ENCODE measurements at regions of chr17 and their contacts with region 1.

Region 1: DNA sequence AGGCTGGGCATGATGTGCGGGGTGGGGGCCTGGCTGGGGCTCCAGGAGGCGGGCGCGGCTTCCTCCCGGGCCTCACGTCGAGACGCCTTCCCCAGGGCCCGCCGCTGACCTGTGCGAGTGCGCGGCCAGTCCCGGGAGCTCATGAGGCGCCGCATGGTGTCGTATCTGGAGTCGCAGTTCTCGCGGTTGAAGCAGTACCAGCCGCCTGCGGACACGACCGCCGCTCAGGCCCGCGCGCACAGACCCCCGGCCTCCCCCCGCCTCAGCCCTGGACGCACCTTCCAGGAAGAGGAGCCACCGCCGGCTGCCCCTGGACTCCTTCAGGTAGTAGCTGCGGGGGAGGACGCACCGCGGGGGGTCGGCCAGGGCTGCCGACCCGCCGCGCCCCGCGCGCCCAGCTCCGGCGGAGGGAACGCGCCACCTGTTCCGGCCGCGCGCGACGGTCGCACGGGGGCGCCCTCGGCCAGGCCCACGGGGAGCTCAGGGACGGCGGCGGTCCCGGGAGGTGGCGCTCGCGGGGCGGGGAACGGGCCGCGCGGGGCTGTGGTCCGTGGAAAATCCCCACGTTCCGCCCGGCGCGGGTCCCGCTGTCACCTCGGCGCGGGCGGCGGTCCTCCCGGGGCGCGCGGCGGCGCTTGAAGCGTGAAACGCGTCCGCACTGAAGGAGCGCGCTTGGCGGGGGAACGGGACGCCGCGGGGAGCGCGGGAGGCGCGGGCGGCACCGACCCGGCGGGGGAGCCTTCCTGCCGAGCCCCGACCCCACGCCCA is 1.4 kb downstream of the NOTUM start:
- DNase-seq: peak; percentile 89
- CTCF ChIP-seq: peak; percentile 100

Region 2: DNA sequence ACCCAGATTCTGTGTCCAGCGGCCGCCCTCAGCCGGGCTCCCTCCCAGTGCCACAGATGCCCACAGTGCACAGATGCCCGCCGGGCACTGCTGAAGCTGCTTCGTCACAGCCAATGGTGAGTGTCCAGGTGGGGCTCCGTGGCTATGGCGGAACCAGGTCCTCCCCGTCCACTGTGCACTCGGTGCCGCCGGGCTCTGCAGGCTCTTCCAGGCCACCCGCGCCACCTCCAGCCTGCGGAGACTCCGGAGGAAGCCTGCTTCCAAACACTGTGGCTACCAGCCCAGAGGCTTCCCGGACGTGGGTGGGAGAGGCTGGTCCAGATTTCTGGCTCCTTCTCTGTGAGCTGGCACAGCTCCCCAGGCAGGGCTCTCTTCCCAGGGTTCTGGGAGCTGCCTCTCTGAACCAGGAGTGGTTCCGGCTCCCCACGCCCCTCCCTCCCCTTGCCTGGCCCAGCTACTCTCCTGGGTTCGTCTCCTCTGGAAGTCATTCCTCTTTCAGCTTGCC is 19.6 kb before region 1 on chr17:
- CTCF ChIA-PET with region 1: interaction called, 15 read pairs
- POLR2A ChIA-PET with region 1: no interaction called
- DNase-seq: no peak
- CTCF ChIP-seq: no peak

Region 3: DNA sequence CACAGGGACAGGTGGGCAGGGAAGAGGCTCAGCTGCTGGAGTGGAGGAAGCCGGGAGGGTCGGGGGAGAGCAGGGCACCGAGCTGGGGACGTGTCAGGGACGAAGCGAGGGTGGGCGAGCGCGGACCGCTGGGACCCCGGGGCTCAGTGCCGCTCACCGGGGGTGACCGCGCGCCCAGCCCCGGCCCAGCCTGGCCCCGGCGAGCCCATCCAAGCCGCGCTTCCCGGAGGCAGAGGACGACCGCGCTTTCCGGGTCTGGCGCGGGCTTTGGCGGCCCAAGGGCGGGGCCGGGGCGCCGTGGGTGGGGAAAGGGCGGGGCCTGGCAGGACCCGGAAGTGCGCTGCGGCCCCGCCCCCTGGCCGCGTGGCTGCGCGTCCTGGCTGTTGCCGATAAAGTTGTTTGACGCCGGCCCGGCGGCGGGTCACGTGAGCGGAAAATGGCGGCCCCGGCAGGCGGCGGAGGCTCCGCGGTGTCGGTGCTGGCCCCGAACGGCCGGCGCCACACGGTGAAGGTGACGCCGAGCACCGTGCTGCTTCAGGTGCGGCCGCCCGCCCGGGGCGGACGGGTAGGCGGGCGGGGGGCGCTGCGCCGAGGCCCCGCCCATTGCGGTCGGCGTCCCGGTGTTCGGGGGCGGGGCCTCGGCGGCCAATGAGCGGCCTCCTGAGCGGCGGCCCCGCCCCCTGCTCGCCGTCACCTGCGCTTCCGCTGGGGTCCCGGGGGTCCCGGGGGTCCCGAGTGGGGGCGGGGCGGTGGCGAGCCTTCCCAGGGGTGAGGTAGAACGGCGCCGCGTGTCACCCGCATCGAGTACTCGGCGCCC is 17.9 kb after region 1 on chr17 and contains the start of gene ASPSCR1:
- CTCF ChIA-PET with region 1: interaction called, 18 read pairs
- POLR2A ChIA-PET with region 1: no interaction called
- DNase-seq: peak; percentile 96
- CTCF ChIP-seq: no peak

Region 4: GRCh38 chr17:82030470-82031302 is 71.1 kb after region 1 on chr17:
- CTCF ChIA-PET with region 1: interaction called, 12 read pairs
- POLR2A ChIA-PET with region 1: no interaction called
- DNase-seq: peak; percentile 86
- CTCF ChIP-seq: peak; percentile 96

Region 5: GRCh38 chr17:82153745-82154375 is 194.3 kb after region 1 on chr17:
- CTCF ChIA-PET with region 1: interaction called, 12 read pairs
- POLR2A ChIA-PET with region 1: no interaction called
- DNase-seq: peak; percentile 92
- CTCF ChIP-seq: peak; percentile 94

Region 6: GRCh38 chr17:82230627-82231311 is 271.2 kb after region 1 on chr17:
- CTCF ChIA-PET with region 1: no interaction called
- POLR2A ChIA-PET with region 1: no interaction called
- DNase-seq: peak; percentile 86
- CTCF ChIP-seq: peak; percentile 35